ENCODE measurements at regions of chr7 and their contacts with region 1.

Region 1: GRCh38 chr7:108459931-108460551 is 3.8 kb upstream of the NRCAM start:
- DNase-seq: peak; percentile 51 to 56
- H3K4me3 ChIP-seq: no peak overlapping the region
- H3K4me1 ChIP-seq: no peaks in the 10 kb centered on the region
- H3K27me3 ChIP-seq: peaks cover 40% of the 10 kb centered on the region

Region 2: DNA sequence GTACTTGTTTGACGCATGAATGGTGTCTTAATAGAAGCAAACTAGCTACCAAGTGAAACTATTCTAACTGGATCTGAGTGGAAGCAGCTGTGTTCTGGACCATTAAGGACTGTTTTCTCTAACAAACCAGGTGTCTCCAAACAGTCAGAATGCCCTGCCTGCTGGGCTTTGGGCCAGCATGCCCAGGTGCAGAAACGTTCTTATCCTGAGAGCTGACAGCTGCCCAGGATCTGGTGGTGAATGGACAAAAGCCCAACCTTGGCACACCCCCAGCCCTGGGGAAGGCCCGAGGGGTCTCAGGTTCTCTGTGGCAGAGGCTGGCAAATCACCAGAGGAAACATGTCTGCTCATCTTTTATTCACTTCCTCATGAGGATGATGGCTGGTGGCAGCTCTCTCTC is 281.6 kb before region 1 on chr7:
- in situ Hi-C with region 1: loop called (anchors 10 kb)
- DNase-seq: no peak
- H3K4me3 ChIP-seq: no peak overlapping the region
- H3K4me1 ChIP-seq: no peaks in the 10 kb centered on the region
- H3K27me3 ChIP-seq: peaks cover 12% of the 10 kb centered on the region

Measured in HAP-1 (cell line).